AG04450 (cell line): ENCODE measurements at regions of chr1 and their contacts with region 1.

Region 1: DNA sequence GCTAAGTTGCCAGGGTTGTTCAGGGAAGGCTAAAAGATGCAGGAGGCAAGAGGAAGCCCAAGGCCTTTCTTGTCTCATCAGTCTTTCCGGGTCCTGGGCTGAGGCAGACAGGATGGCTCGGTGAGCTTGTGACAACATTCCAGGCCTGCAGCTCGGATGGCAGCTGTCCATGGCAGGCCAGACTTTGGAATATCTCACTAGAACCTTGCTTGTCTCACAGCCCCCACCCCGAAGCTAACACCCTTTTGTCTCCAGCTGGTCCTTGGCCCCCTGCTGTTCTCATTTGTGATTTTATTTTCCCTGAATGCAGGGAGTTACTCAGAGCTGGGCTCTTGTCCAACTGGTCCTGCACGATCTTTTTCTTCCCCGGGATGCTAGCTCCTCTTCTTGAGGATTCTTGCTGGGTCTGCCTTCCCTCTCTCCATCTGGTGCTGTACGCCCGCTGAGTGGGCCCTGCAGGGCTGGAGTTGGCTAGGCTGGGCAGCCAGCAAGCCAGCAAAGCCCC is 477.2 kb upstream of the CAMK1G start:
- DNase-seq: no peak
- H3K4me3 ChIP-seq: no peak overlapping the region
- H3K27ac ChIP-seq: no peak overlapping the region
- H3K27me3 ChIP-seq: peaks cover 3% of the 10 kb centered on the region
- CTCF ChIP-seq: no peak

Region 2: DNA sequence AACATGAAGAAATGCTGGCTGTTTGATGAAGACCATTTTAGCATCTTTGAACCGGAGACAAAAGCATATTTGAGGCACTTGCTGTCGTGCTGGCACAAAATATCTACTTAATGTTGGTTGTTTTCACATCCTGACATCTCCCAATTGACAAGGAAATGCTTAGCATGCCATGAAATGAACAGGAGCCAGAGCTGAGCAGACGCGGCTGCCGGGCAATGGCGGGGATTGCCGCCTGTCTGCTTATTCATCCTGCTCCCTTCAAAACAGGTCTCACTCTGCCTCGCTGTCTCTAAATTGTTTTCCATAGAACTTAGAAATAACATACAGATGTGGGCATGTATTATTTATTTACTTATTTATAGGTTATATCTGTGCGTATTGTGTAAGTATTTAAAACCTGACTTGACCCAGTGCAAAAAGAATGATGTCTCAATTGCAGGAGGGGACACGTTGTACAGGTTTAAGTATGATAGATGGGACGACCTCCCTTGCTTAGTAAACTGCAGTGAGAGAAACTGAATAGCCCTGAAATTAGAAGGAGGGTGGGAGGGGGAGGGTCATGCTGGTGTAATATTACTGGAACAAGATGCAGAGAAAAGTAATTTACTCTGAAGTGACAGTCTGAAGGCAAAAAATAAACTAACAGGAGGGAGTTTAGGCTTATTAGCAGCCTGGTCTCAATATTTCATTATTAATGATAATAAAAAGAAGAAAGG is 271.8 kb before region 1 on chr1:
- CTCF ChIA-PET with region 1: no interaction called
- POLR2A ChIA-PET with region 1: no interaction called
- DNase-seq: no peak
- H3K4me3 ChIP-seq: no peak overlapping the region
- H3K27ac ChIP-seq: no peak overlapping the region
- H3K27me3 ChIP-seq: no peaks in the 10 kb centered on the region
- CTCF ChIP-seq: no peak

Region 3: GRCh38 chr1:209012443-209013196 is 93.7 kb before region 1 on chr1:
- CTCF ChIA-PET with region 1: no interaction called
- POLR2A ChIA-PET with region 1: interaction called, 12 read pairs
- DNase-seq: no peak
- H3K4me3 ChIP-seq: no peak overlapping the region
- H3K27ac ChIP-seq: no peak overlapping the region
- H3K27me3 ChIP-seq: no peaks in the 10 kb centered on the region
- CTCF ChIP-seq: no peak

Region 4: DNA sequence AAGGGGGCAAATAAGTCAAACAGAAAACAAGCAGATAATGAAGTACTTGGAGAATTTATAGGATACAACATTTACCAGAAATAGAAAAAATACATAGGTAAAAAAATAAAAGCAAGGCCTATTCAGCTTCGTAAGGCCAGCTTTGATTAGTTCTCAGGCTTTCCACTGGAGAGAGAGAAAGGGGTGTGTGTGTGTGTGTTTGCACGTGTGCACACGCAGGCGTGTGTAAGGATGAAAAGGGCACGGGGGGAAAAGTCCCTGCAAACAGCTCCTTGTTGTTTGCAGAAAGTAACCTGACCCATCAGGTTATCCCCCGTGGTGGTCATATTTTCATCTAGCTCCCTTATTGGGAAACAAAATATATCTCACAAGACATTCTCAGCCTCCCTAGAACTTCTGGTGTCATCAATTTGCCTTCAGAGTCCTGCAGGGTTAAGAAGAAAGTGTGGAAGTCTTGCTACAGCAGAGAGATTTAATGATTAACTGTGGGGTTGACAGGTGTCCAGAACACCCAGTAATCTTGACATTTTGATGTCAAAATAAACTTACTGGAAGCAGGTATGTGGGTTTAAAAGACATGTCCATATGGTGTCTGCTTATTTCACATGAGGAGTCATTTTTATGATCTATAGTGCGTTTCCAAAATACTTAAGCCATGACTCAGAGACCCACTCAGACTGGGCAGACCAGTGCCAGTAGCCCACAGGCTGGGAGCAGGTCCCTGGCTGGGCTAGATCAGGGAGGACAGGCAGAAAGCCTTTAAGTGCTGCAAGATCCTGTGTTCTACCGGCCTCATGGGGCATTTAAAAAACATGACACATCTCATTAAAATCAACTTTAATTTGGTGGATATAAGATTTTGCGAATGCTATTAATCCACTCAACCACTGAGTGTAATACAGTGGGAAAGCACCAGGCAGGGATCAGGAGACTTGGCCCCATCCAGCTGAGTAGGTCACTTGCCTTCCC is 10.4 kb before region 1 on chr1:
- CTCF ChIA-PET with region 1: no interaction called
- POLR2A ChIA-PET with region 1: no interaction called
- DNase-seq: no peak
- H3K4me3 ChIP-seq: no peak overlapping the region
- H3K27ac ChIP-seq: no peak overlapping the region
- H3K27me3 ChIP-seq: no peaks in the 10 kb centered on the region
- CTCF ChIP-seq: no peak